ENCODE measurements at regions of chr4 and their contacts with region 1.

Region 1: GRCh38 chr4:42568610-42569207 is 88.2 kb downstream of the ATP8A1 start:
- DNase-seq: no peak
- ATAC-seq: peak; percentile 82 to 90
- H3K4me3 ChIP-seq: no peak overlapping the region
- H3K27ac ChIP-seq: no peak overlapping the region
- H3K4me1 ChIP-seq: peaks cover 10% of the 10 kb centered on the region
- H3K27me3 ChIP-seq: no peaks in the 10 kb centered on the region
- CTCF ChIP-seq: peak; percentile 79

Region 2: GRCh38 chr4:42709392-42710091 is 140.8 kb after region 1 on chr4:
- intact Hi-C with region 1: no loop called
- DNase-seq: no peak
- ATAC-seq: peak in 1 of 2 donors; percentile 81
- H3K4me3 ChIP-seq: no peak overlapping the region
- H3K27ac ChIP-seq: no peak overlapping the region
- H3K4me1 ChIP-seq: no peaks in the 10 kb centered on the region
- H3K27me3 ChIP-seq: no peaks in the 10 kb centered on the region
- CTCF ChIP-seq: no peak

Region 3: DNA sequence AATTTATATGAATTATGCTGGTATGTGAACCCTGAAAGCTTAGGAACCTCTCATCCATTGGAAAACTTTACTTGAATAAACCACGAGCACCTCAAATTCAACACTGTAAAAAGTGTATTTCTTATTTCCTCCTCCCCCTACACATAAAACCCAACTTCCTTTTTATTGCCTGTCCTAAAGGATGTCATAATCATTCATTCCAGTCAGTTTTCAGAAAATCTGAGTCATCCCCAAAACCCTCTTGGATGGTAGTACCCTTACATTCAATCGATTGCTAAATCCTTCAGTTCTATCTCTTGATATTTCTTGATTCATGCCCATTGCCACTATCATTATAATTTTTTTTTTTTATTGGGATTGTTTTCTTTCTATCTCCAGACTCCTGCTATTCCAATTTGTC is 179.3 kb after region 1 on chr4:
- intact Hi-C with region 1: loop called (anchors 10 kb)
- DNase-seq: no peak
- ATAC-seq: no peak
- H3K4me3 ChIP-seq: no peak overlapping the region
- H3K27ac ChIP-seq: no peak overlapping the region
- H3K4me1 ChIP-seq: no peaks in the 10 kb centered on the region
- H3K27me3 ChIP-seq: no peaks in the 10 kb centered on the region
- CTCF ChIP-seq: no peak

Measured in lower lobe of right lung (tissue), 2 donors.